SK-N-SH (cell line): ENCODE measurements at regions of chr11 and their contacts with region 1.

Region 1: GRCh38 chr11:103682318-103683184 is 353.9 kb upstream of the DDI1 start:
- DNase-seq: peak; percentile 49
- H3K4me3 ChIP-seq: no peak overlapping the region; a peak in 1 of 4 replicates
- H3K27ac ChIP-seq: peak overlapping the region in 1 of 2 experiments; percentile 34; a peak in 1 of 4 replicates
- H3K4me1 ChIP-seq: peaks cover 6 to 8% of the 10 kb centered on the region in 2 experiments; a peak in 2 of 4 replicates
- H3K27me3 ChIP-seq: no peaks in the 10 kb centered on the region
- CTCF ChIP-seq: peak; percentile 92
- EP300 ChIP-seq: no peak
- RAD21 ChIP-seq: peak; percentile 96

Region 2: DNA sequence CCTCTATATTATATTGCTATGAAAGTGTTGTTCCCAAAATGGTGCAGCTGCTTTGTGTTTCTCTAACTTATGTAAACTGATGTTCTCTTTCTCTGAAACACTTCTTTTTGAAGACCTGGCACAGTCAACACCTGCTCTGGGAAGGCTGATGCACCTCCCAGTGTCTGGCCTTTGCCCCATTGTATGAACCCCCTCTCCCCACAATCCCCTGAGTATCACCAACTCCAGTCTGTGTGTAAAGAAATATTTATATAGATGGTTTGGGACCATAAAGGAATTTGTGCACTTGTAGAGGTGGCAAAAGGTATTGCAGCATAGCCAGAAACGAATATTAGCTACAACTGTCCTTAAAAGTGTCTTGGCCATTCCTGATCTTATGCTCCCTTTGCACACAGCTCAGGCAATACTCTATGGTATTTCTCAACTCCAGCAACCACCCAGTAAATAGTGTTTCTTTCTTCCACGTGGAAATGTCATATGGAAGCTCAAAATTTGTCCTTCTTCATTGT is 11.4 kb before region 1 on chr11:
- CTCF ChIA-PET with region 1: interaction called, 16 read pairs
- POLR2A ChIA-PET with region 1: no interaction called
- DNase-seq: no peak
- H3K4me3 ChIP-seq: no peak overlapping the region
- H3K27ac ChIP-seq: no peak overlapping the region
- H3K4me1 ChIP-seq: peaks cover 2 to 9% of the 10 kb centered on the region in 2 experiments; a peak in 2 of 4 replicates
- H3K27me3 ChIP-seq: no peaks in the 10 kb centered on the region
- CTCF ChIP-seq: peak; percentile 25; the same call in 1 of the 2 replicates
- EP300 ChIP-seq: no peak
- RAD21 ChIP-seq: no peak

Region 3: DNA sequence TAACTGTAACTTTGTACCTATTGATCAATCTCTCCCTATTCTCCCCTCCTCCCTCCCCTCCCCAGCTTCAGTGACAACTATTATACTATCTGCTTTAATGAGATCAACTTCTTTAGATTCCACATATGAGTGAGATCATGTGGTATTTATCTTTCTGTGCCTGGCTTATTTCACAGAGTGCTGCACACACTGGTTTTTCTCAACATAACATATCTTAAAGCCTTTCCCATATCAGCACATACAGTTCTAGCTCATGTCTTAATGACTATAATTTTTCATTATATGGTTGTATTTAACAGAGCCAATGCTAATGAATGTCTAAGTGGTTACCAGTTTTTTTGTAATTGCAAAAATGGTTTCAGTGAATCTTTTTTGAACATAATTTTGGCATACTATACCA is 13.6 kb after region 1 on chr11:
- CTCF ChIA-PET with region 1: interaction called, 14 read pairs
- POLR2A ChIA-PET with region 1: no interaction called
- DNase-seq: peak; percentile 11
- H3K4me3 ChIP-seq: no peak overlapping the region
- H3K27ac ChIP-seq: peak overlapping the region in 1 of 2 experiments; percentile 47; a peak in 1 of 4 replicates
- H3K4me1 ChIP-seq: peaks cover 4 to 5% of the 10 kb centered on the region in 2 experiments; a peak in 3 of 4 replicates
- H3K27me3 ChIP-seq: no peaks in the 10 kb centered on the region
- CTCF ChIP-seq: no peak
- EP300 ChIP-seq: peak in 1 of 2 experiments; percentile 74; a peak in 2 of 4 replicates
- RAD21 ChIP-seq: no peak

Region 4: GRCh38 chr11:104164028-104164520 is 481.5 kb after region 1 on chr11 and contains the start of gene PDGFD:
- CTCF ChIA-PET with region 1: interaction called, 18 read pairs
- POLR2A ChIA-PET with region 1: no interaction called
- DNase-seq: peak; percentile 86
- H3K4me3 ChIP-seq: peak within 1 kb of the TSS; percentile 66 to 84
- H3K27ac ChIP-seq: peak within 1 kb of the TSS; percentile 20 to 65; a peak in 3 of 4 replicates
- H3K4me1 ChIP-seq: peaks cover 12 to 13% of the 10 kb centered on the region in 2 experiments; a peak in 2 of 4 replicates
- H3K27me3 ChIP-seq: no peaks in the 10 kb centered on the region
- CTCF ChIP-seq: peak; percentile 53
- EP300 ChIP-seq: no peak
- RAD21 ChIP-seq: peak; percentile 53; the same call in 1 of the 2 replicates
- polyA plus RNA-seq, gene PDGFD: 4.8 and 7.0 TPM in 2 replicates